Activated naive CD4-positive, alpha-beta T cell treated with anti-CD3 and anti-CD28 coated beads, Interleukin-2, amount 10 ng/mL, durations not matched to agents 7 days and 5 days (primary cell): ENCODE measurements at regions of chr1 and their contacts with region 1.

Region 1: GRCh38 chr1:42777852-42778251 is 6.9 kb upstream of the TMEM269 start:
- DNase-seq: peak; percentile 59
- H3K4me3 Mint-ChIP-seq: no peak overlapping the region
- H3K27ac Mint-ChIP-seq: no peak overlapping the region
- H3K4me1 Mint-ChIP-seq: peaks cover 17% of the 10 kb centered on the region
- H3K27me3 Mint-ChIP-seq: no peaks in the 10 kb centered on the region

Region 2: DNA sequence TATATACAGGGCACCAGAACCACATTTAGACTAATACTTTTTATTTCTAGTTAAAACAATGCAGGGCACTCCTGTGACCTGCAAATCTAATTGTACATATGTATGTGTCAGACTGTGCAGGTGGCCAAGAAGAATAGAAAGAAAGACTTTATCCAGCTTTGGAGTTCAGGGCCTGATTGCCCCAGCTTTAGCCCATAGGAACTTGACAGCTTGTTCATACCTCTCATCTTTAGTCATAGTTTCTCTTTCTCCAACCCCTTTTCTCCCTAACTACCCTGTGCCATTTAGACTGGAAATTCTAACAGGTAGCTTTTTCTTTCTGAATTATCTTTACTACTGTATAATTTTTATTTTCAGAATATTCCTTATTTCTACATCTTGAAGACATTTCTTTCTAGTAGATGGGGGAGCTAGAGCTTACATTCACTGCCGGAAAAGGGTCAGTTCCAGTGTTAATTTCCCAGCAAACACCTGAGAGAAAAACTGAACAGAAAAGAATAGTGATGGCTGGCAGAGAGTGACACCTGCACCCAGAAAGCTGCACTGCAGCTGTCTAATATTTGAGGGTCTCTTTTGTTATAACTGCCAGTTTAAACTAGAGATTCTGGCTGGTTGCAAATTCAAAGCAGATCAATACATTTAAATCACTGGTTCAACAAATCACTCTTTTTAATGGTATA is 87.2 kb before region 1 on chr1:
- CTCF ChIA-PET with region 1: no interaction called
- DNase-seq: no peak
- H3K4me3 Mint-ChIP-seq: no peak overlapping the region
- H3K27ac Mint-ChIP-seq: no peak overlapping the region
- H3K4me1 Mint-ChIP-seq: peaks cover 79% of the 10 kb centered on the region
- H3K27me3 Mint-ChIP-seq: no peaks in the 10 kb centered on the region

Region 3: DNA sequence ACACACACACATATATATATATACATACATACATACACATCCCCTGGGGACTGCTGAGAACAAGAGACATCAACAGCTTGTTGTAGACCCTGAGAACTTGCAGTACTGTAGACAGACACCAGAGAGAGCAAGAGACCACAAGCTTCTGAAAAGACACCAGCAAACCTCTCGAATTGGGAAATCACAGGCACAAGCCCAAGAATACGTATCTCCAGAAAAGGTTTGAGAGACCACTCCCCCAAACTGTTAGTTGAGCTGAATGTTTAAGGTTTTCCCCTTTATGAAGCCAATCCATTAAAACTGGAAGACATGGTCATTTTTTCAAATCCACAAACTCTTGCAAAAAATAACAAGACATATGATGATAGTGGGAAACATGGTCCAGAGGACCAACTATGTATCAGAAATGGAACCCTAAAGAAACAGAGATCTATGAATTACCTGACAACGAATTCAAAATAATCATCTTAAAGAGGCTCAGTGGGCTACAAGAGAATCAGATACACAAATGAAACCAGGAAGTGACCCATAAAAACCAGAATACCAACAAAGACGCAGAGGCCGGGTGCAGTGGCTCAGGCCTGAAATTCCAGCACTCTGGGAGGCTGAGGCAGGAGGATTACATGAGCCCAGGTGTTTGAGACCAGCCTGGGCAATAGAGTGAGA is 135.7 kb after region 1 on chr1:
- CTCF ChIA-PET with region 1: interaction called, 34 read pairs
- DNase-seq: peak; percentile 71
- H3K4me3 Mint-ChIP-seq: no peak overlapping the region
- H3K27ac Mint-ChIP-seq: no peak overlapping the region
- H3K4me1 Mint-ChIP-seq: peaks cover 5% of the 10 kb centered on the region
- H3K27me3 Mint-ChIP-seq: peaks cover 35% of the 10 kb centered on the region